ENCODE measurements at regions of chr1 and their contacts with region 1.

Region 1: GRCh38 chr1:19661721-19662228 is 2.9 kb upstream of the HTR6 start:
- DNase-seq: no peak
- H3K4me3 ChIP-seq: no peak overlapping the region
- H3K27ac ChIP-seq: no peak overlapping the region
- H3K4me1 ChIP-seq: peaks cover 0 to 5% (median 0%) of the 10 kb centered on the region in 4 experiments; a peak in 4 of 7 replicates
- H3K27me3 ChIP-seq: peaks cover 28 to 38% (median 34%) of the 10 kb centered on the region in 4 experiments
- CTCF ChIP-seq: peak in 2 of 3 experiments; percentile 48 to 67; a peak in 3 of 4 replicates
- EP300 ChIP-seq: no peak
- POLR2A ChIP-seq: no peak
- RAD21 ChIP-seq: peak; percentile 67 to 71

Region 2: GRCh38 chr1:19547814-19548213 is 114.0 kb before region 1 on chr1:
- CTCF ChIA-PET with region 1: no interaction called
- POLR2A ChIA-PET with region 1: no interaction called
- DNase-seq: no peak
- H3K4me3 ChIP-seq: no peak overlapping the region
- H3K27ac ChIP-seq: no peak overlapping the region
- H3K4me1 ChIP-seq: no peaks in the 10 kb centered on the region
- H3K27me3 ChIP-seq: no peaks in the 10 kb centered on the region
- CTCF ChIP-seq: no peak
- EP300 ChIP-seq: no peak
- POLR2A ChIP-seq: no peak
- RAD21 ChIP-seq: no peak

Region 3: GRCh38 chr1:19643602-19644394 is 18.0 kb before region 1 on chr1 and contains the start of gene NBL1:
- CTCF ChIA-PET with region 1: interaction called, 23 read pairs
- POLR2A ChIA-PET with region 1: interaction called, 3 read pairs
- DNase-seq: peak in 1 of 2 experiments; percentile 75
- H3K4me3 ChIP-seq: peak within 1 kb of the TSS; percentile 58 to 77 (median 66)
- H3K27ac ChIP-seq: no peak within 1 kb of the TSS
- H3K4me1 ChIP-seq: peaks cover 5 to 17% (median 12%) of the 10 kb centered on the region in 4 experiments
- H3K27me3 ChIP-seq: peaks cover 24 to 50% (median 35%) of the 10 kb centered on the region in 4 experiments
- CTCF ChIP-seq: no peak
- EP300 ChIP-seq: no peak
- POLR2A ChIP-seq: no peak
- RAD21 ChIP-seq: no peak
- total RNA-seq, gene NBL1: 9.7 and 10.4 TPM in 2 replicates

Region 4: DNA sequence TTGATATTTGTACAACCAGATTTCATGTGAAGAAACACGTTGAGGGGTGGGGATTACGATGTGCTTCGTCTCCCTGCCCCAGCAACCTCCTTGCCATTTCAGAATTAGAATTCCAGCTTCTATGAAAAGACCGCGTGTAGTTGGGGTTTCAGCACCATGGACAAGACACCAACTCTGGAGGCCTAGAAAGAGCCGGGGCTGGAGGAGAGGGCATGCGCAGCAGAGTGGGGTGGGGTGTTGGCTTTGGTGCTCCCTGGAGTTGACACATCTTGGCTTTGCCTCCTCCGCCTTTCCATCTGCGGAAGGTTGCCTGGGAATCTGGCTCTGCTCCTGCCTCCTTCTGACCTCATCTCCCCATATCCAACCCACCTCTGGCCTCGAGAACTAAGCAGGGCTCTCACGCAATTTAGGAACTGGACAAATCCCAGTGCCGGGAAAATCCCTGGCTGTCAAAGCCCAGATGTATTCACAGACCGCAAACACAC is 14.7 kb after region 1 on chr1:
- CTCF ChIA-PET with region 1: interaction called, 68 read pairs
- POLR2A ChIA-PET with region 1: no interaction called
- DNase-seq: peak; percentile 25 to 82
- H3K4me3 ChIP-seq: no peak overlapping the region
- H3K27ac ChIP-seq: no peak overlapping the region
- H3K4me1 ChIP-seq: peaks cover 0 to 7% (median 2%) of the 10 kb centered on the region in 4 experiments; a peak in 1 of 7 replicates
- H3K27me3 ChIP-seq: no peaks in the 10 kb centered on the region; a peak in 2 of 7 replicates
- CTCF ChIP-seq: no peak
- EP300 ChIP-seq: no peak
- POLR2A ChIP-seq: no peak
- RAD21 ChIP-seq: no peak

Region 5: GRCh38 chr1:19689085-19689757 is 27.4 kb after region 1 on chr1:
- CTCF ChIA-PET with region 1: interaction called, 12 read pairs
- POLR2A ChIA-PET with region 1: no interaction called
- DNase-seq: no peak
- H3K4me3 ChIP-seq: no peak overlapping the region
- H3K27ac ChIP-seq: no peak overlapping the region
- H3K4me1 ChIP-seq: peaks cover 3 to 13% (median 10%) of the 10 kb centered on the region in 4 experiments
- H3K27me3 ChIP-seq: no peaks in the 10 kb centered on the region
- CTCF ChIP-seq: no peak
- EP300 ChIP-seq: no peak
- POLR2A ChIP-seq: no peak
- RAD21 ChIP-seq: no peak

Region 6: GRCh38 chr1:19704247-19705113 is 42.7 kb after region 1 on chr1:
- CTCF ChIA-PET with region 1: interaction called, 127 read pairs
- POLR2A ChIA-PET with region 1: no interaction called
- DNase-seq: peak; percentile 69 to 95
- H3K4me3 ChIP-seq: peak overlapping the region in 1 of 4 experiments; percentile 41; a peak in 2 of 8 replicates
- H3K27ac ChIP-seq: no peak overlapping the region
- H3K4me1 ChIP-seq: peaks cover 0 to 8% (median 3%) of the 10 kb centered on the region in 4 experiments; a peak in 5 of 7 replicates
- H3K27me3 ChIP-seq: no peaks in the 10 kb centered on the region
- CTCF ChIP-seq: peak; percentile 92 to 95 (median 94)
- EP300 ChIP-seq: no peak
- POLR2A ChIP-seq: no peak
- RAD21 ChIP-seq: peak; percentile 66 to 78

Region 7: GRCh38 chr1:19728413-19729145 is 66.8 kb after region 1 on chr1:
- CTCF ChIA-PET with region 1: interaction called, 10 read pairs
- POLR2A ChIA-PET with region 1: no interaction called
- DNase-seq: no peak
- H3K4me3 ChIP-seq: no peak overlapping the region
- H3K27ac ChIP-seq: no peak overlapping the region
- H3K4me1 ChIP-seq: peaks cover 0 to 3% (median 0%) of the 10 kb centered on the region in 4 experiments; a peak in 2 of 7 replicates
- H3K27me3 ChIP-seq: no peaks in the 10 kb centered on the region
- CTCF ChIP-seq: no peak
- EP300 ChIP-seq: no peak
- POLR2A ChIP-seq: no peak
- RAD21 ChIP-seq: no peak

Region 8: GRCh38 chr1:19811206-19811851 is 149.6 kb after region 1 on chr1:
- CTCF ChIA-PET with region 1: interaction called, 11 read pairs
- POLR2A ChIA-PET with region 1: no interaction called
- DNase-seq: peak in 1 of 2 experiments; percentile 75
- H3K4me3 ChIP-seq: no peak overlapping the region
- H3K27ac ChIP-seq: no peak overlapping the region
- H3K4me1 ChIP-seq: peaks cover 6 to 9% (median 7%) of the 10 kb centered on the region in 4 experiments
- H3K27me3 ChIP-seq: no peaks in the 10 kb centered on the region
- CTCF ChIP-seq: peak; percentile 81 to 84 (median 81)
- EP300 ChIP-seq: no peak
- POLR2A ChIP-seq: no peak
- RAD21 ChIP-seq: peak; percentile 55 to 75

Measured in H1 (cell line).